ENCODE measurements at regions of chr2 and their contacts with region 1.

Region 1: GRCh38 chr2:56671973-56672571 is 488.3 kb downstream of the CCDC85A start:
- DNase-seq: no peak
- H3K4me3 ChIP-seq: no peak overlapping the region
- H3K27ac ChIP-seq: no peak overlapping the region
- H3K4me1 ChIP-seq: no peaks in the 10 kb centered on the region
- H3K27me3 ChIP-seq: no peaks in the 10 kb centered on the region
- CTCF ChIP-seq: no peak
- POLR2A ChIP-seq: no peak

Region 2: DNA sequence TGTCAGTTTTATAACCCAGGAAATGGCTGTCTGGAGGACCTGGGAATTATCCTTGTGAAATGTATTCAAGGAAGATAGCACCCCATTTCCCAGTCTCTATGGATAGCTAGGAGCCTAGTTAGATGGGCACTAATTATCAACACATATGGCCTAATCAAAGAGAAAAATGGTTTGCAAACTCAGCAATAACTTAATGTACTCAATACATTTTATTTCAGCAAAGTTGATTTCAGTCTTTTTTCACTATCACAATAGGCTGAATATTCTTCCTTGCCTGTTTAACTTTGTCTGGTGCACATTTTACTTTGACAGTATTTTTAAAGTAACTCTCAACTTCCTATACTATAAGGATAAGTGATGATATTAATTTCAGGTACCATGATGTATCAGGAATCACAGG is 268.0 kb after region 1 on chr2:
- intact Hi-C with region 1: loop called (anchors 10 kb)
- DNase-seq: no peak
- H3K4me3 ChIP-seq: no peak overlapping the region
- H3K27ac ChIP-seq: no peak overlapping the region
- H3K4me1 ChIP-seq: no peaks in the 10 kb centered on the region
- H3K27me3 ChIP-seq: no peaks in the 10 kb centered on the region
- CTCF ChIP-seq: no peak
- POLR2A ChIP-seq: no peak